AG04450 (cell line): ENCODE measurements at regions of chr6 and their contacts with region 1.

Region 1: DNA sequence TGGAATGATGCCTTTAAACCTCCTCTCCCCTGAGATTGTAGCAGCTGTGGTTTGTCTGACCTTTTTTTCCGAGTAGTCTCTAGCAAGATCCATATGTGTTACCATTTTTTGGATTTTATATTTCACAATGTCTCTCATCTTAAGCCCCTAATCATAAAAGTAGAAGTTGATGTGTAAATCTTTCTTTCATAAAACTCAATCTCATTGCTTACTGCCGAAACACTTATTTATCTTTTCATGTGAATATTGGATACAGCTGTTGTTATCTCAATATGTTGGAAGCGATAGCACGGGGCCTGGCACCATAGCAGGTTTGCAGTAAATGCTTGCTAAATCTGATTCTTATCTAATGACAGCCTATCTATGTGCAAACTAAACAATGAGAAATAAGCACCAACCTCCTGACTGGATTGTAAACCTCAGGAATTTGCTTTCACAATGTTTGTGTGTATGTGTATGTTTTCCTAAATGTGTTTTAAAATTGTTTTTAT is 14.2 kb downstream of the SMPDL3A start:
- DNase-seq: peak; percentile 79
- H3K4me3 ChIP-seq: no peak overlapping the region
- H3K27ac ChIP-seq: peak overlapping the region; percentile 47
- H3K27me3 ChIP-seq: no peaks in the 10 kb centered on the region
- CTCF ChIP-seq: no peak

Region 2: GRCh38 chr6:122833021-122833491 is 29.8 kb after region 1 on chr6:
- CTCF ChIA-PET with region 1: interaction called, 19 read pairs
- POLR2A ChIA-PET with region 1: interaction called, 12 read pairs
- DNase-seq: no peak
- H3K4me3 ChIP-seq: no peak overlapping the region
- H3K27ac ChIP-seq: no peak overlapping the region
- H3K27me3 ChIP-seq: peaks cover 7% of the 10 kb centered on the region
- CTCF ChIP-seq: no peak